Posterior vena cava (tissue), 2 donors: ENCODE measurements at regions of chr2 and their contacts with region 1.

Region 1: DNA sequence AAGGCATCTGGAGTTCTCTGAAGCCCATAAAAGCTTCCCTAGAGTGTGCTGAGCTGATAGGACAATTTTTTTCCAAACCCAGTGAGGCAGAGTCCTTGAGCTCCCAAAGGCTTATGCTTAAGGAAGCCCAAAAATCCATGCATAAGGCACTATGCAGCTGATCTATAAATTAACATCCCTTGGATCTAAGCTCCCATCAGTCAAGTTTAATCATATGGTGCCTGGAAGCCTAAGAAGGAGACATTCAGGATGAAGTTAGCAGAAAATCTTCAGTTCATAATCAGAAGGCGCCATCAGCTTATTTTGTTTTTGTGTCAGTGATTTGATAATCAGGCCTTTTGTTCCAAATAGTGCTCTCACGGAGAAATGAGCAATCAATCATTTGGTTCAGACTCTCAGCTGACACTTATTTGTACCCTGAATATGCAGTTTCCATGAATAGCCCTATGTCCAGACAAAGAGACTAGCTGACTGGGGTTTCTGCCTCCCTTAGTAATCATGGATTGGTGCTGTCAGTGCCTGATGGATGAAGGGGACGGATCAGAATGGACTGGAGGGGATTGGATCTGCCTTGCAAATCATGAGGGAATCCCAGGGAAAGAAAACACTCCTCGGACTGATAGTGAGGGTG is 464.8 kb upstream of the RGPD4 start:
- DNase-seq: no peak

Region 2: DNA sequence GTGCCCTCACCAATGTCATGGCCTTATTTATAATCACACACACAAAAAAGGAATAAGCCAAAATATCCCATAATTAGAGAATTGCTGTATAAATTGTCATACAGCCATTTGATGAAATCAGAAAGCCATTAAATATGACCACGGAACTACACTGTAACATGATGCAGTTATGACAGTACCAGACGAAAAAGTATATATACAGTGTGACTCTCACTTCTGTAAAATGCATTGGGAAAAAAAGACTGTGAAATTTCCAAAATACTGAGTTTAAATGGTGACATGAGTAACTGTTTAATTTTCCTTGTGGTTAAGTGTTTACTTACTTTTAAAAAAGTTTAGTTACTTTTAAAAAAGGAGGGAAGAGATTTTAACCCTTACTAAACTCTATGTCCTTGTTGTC is 1193.2 kb before region 1 on chr2:
- intact Hi-C with region 1: no loop called
- DNase-seq: no peak

Region 3: GRCh38 chr2:107325981-107326786 is 35.7 kb before region 1 on chr2:
- intact Hi-C with region 1: loop called in 1 of 2 experiments (anchors 5 kb)
- DNase-seq: no peak

Region 4: GRCh38 chr2:107380912-107381311 is 19.0 kb after region 1 on chr2:
- intact Hi-C with region 1: no loop called
- DNase-seq: no peak